Endothelial cell of umbilical vein (primary cell): ENCODE measurements at regions of chr4 and their contacts with region 1.

Region 1: DNA sequence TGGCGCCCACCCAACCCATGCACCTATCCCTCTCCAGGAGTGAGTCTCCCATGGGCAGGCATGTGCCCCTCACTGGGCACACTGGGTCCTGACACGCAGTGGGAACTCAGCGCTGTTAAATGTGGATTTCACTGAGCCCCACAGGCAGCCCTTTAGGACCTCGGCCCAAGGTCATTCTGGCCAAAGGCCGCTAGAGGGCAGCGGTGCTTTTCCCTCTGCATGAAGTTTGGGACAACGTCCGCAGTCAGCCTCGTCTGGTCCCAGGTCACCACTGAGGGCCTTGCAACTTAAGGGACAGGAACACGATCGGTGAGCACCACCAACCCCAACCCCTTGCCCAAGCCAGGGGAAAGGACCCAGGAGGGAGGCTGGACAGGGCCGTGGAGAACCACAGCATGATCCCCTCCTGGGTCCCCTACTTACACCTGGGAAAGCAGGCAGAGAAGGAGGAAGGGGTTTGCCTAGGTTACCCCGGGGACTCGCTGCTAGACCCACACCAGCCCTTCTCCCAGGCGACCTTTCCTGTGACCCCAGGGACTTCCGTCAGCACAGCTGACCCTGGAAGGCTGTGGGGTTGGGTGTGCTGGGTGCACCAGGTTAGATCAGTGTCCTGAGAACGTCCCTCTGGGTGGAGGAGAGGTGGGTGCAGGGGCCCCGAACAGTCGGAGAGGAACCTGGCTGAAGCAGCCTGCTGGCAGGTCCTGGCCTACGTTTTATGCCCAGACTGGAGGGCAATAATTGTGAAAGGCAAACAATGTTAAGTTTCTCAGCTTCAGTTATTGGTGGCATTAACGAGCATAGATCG is 24.0 kb downstream of the CYTL1 start:
- DNase-seq: peak; percentile 57
- H3K4me3 ChIP-seq: no peak overlapping the region
- H3K27ac ChIP-seq: no peak overlapping the region
- H3K4me1 ChIP-seq: no peaks in the 10 kb centered on the region
- H3K27me3 ChIP-seq: peaks cover 0 to 5% of the 10 kb centered on the region in 2 experiments
- CTCF ChIP-seq: peak; percentile 91 to 97
- POLR2A ChIP-seq: no peak

Region 2: GRCh38 chr4:4981427-4981826 is 13.9 kb before region 1 on chr4:
- CTCF ChIA-PET with region 1: no interaction called
- POLR2A ChIA-PET with region 1: no interaction called
- dilution Hi-C with region 1: no loop called
- intact Hi-C with region 1: no loop called
- DNase-seq: no peak
- H3K4me3 ChIP-seq: no peak overlapping the region
- H3K27ac ChIP-seq: no peak overlapping the region
- H3K4me1 ChIP-seq: no peaks in the 10 kb centered on the region
- H3K27me3 ChIP-seq: no peaks in the 10 kb centered on the region
- CTCF ChIP-seq: no peak
- POLR2A ChIP-seq: no peak

Region 3: GRCh38 chr4:5037553-5038551 is 42.5 kb after region 1 on chr4:
- CTCF ChIA-PET with region 1: no interaction called
- POLR2A ChIA-PET with region 1: no interaction called
- dilution Hi-C with region 1: no loop called
- intact Hi-C with region 1: loop called (anchors 5 kb)
- DNase-seq: peak; percentile 83
- H3K4me3 ChIP-seq: no peak overlapping the region
- H3K27ac ChIP-seq: peak overlapping the region; percentile 88
- H3K4me1 ChIP-seq: peaks cover 43% of the 10 kb centered on the region
- H3K27me3 ChIP-seq: no peaks in the 10 kb centered on the region
- CTCF ChIP-seq: no peak
- POLR2A ChIP-seq: no peak

Region 4: DNA sequence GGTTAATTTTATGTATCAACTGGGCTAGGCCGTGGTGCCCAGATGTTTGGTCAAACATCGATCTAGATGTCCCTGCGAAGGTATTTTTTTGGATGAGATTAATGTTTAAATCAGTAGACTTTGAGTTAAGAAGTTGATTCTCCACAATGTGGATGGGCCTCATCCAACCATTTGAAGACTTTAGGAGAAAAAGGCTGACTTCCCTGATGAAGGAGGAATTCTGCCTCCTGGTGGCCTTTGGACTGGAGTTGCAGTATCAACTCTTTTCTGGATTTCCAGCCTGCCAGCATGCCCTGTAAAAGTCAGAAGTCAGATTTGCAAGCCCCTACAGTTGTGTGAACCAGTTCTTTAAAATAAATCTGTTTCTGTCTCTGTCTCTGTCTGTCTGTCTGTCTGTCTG is 147.4 kb after region 1 on chr4:
- CTCF ChIA-PET with region 1: interaction called, 5 read pairs
- POLR2A ChIA-PET with region 1: no interaction called
- dilution Hi-C with region 1: no loop called
- intact Hi-C with region 1: loop called (anchors 1 kb)
- DNase-seq: peak; percentile 53
- H3K4me3 ChIP-seq: no peak overlapping the region
- H3K27ac ChIP-seq: no peak overlapping the region
- H3K4me1 ChIP-seq: no peaks in the 10 kb centered on the region
- H3K27me3 ChIP-seq: peaks cover 2 to 3% of the 10 kb centered on the region in 2 experiments
- CTCF ChIP-seq: peak; percentile 48 to 62
- POLR2A ChIP-seq: no peak

Region 5: GRCh38 chr4:5378002-5378401 is 382.7 kb after region 1 on chr4:
- CTCF ChIA-PET with region 1: no interaction called
- POLR2A ChIA-PET with region 1: no interaction called
- dilution Hi-C with region 1: no loop called
- intact Hi-C with region 1: loop called (anchors 5 kb)
- DNase-seq: no peak
- H3K4me3 ChIP-seq: no peak overlapping the region
- H3K27ac ChIP-seq: no peak overlapping the region
- H3K4me1 ChIP-seq: no peaks in the 10 kb centered on the region
- H3K27me3 ChIP-seq: no peaks in the 10 kb centered on the region
- CTCF ChIP-seq: no peak
- POLR2A ChIP-seq: no peak

Region 6: DNA sequence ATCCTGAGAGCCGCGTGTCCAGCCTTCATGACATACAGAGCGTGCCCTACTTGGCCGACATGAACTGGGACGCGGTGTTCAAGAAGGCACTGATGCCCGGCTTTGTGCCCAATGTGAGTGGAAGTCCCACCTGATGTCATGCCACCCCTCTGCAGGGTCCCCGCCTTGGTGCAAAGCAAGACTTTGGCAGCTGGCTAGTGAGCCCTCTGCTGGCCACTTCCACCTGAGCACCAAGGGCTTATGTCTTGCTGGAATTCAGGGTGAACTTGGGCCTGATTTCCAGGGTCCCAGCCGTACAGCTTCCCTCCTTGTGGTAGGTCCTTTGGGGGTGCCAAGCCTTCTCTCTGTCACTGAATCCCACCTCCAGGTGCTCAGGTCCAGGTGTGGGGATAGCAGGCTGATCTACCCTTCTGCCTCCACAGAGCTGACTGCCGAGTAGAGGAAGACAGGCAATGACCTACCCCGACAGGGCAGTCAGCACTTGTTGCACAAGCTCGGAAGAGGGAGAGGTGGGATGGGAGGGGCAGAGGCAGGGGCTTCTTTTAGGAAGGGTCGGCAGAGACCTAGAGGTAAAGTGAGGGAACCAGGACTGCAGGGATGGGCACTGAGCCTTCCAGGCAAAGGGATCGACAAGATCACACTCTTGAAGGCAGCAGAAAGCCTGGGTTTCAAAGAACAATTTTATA is 465.0 kb after region 1 on chr4:
- CTCF ChIA-PET with region 1: interaction called, 9 read pairs
- POLR2A ChIA-PET with region 1: no interaction called
- dilution Hi-C with region 1: no loop called
- intact Hi-C with region 1: loop called (anchors 1 kb)
- DNase-seq: peak; percentile 7
- H3K4me3 ChIP-seq: no peak overlapping the region
- H3K27ac ChIP-seq: no peak overlapping the region
- H3K4me1 ChIP-seq: no peaks in the 10 kb centered on the region
- H3K27me3 ChIP-seq: no peaks in the 10 kb centered on the region
- CTCF ChIP-seq: peak; percentile 36 to 64
- POLR2A ChIP-seq: no peak

Region 7: GRCh38 chr4:5791654-5792053 is 796.3 kb after region 1 on chr4:
- CTCF ChIA-PET with region 1: no interaction called
- POLR2A ChIA-PET with region 1: no interaction called
- dilution Hi-C with region 1: no loop called
- intact Hi-C with region 1: loop called (anchors 1 kb)
- DNase-seq: no peak
- H3K4me3 ChIP-seq: no peak overlapping the region
- H3K27ac ChIP-seq: no peak overlapping the region
- H3K4me1 ChIP-seq: no peaks in the 10 kb centered on the region
- H3K27me3 ChIP-seq: no peaks in the 10 kb centered on the region
- CTCF ChIP-seq: no peak
- POLR2A ChIP-seq: no peak

Region 8: GRCh38 chr4:5812506-5813229 is 817.4 kb after region 1 on chr4:
- CTCF ChIA-PET with region 1: interaction called, 3 read pairs
- POLR2A ChIA-PET with region 1: no interaction called
- dilution Hi-C with region 1: no loop called
- intact Hi-C with region 1: loop called (anchors 2 kb)
- DNase-seq: peak; percentile 36
- H3K4me3 ChIP-seq: no peak overlapping the region
- H3K27ac ChIP-seq: no peak overlapping the region
- H3K4me1 ChIP-seq: no peaks in the 10 kb centered on the region
- H3K27me3 ChIP-seq: no peaks in the 10 kb centered on the region
- CTCF ChIP-seq: peak; percentile 41 to 58
- POLR2A ChIP-seq: no peak